ENCODE measurements at regions of chr14 and their contacts with region 1.

Region 1: GRCh38 chr14:50231475-50232275 is at the start of gene SOS2:
- DNase-seq: peak; percentile 95
- H3K4me3 Mint-ChIP-seq: peak within 1 kb of the TSS; percentile 92
- H3K27ac Mint-ChIP-seq: peak within 1 kb of the TSS; percentile 90
- H3K4me1 Mint-ChIP-seq: peaks cover 37% of the 10 kb centered on the region
- H3K27me3 Mint-ChIP-seq: no peaks in the 10 kb centered on the region
- total RNA-seq, gene SOS2: 17.7 and 17.8 TPM in 2 replicates

Region 2: DNA sequence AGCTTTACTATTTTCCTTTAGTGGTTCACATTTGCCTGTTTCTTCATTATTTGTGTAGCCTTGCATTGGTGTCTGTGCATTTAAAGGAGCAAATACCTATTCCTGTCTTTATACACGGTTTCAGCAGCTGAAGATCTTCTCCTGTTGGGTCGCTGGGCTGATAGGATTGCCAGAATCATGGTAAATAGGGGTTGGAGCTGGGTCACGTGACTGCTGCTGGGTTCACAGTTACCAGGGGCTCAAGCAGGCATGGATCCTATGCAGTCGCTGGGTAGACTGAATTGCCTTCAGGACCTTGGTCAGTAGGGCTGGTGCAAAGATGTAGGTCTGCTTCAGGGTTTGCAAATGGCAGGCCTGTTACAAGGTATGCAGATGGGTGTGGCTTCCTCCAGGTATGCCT is 1043.9 kb before region 1 on chr14:
- intact Hi-C with region 1: no loop called
- DNase-seq: no peak
- H3K4me3 Mint-ChIP-seq: no peak overlapping the region
- H3K27ac Mint-ChIP-seq: no peak overlapping the region
- H3K4me1 Mint-ChIP-seq: no peaks in the 10 kb centered on the region
- H3K27me3 Mint-ChIP-seq: no peaks in the 10 kb centered on the region

Region 3: GRCh38 chr14:49585803-49586672 is 645.6 kb before region 1 on chr14 and contains the start of gene RPS29:
- intact Hi-C with region 1: loop called (anchors 2 kb)
- DNase-seq: peak; percentile 99
- H3K4me3 Mint-ChIP-seq: peak within 1 kb of the TSS; percentile 89
- H3K27ac Mint-ChIP-seq: peak within 1 kb of the TSS; percentile 99
- H3K4me1 Mint-ChIP-seq: peaks cover 35% of the 10 kb centered on the region
- H3K27me3 Mint-ChIP-seq: peaks cover 3% of the 10 kb centered on the region
- total RNA-seq, gene RPS29: 1,960 and 2,033 TPM in 2 replicates

Region 4: DNA sequence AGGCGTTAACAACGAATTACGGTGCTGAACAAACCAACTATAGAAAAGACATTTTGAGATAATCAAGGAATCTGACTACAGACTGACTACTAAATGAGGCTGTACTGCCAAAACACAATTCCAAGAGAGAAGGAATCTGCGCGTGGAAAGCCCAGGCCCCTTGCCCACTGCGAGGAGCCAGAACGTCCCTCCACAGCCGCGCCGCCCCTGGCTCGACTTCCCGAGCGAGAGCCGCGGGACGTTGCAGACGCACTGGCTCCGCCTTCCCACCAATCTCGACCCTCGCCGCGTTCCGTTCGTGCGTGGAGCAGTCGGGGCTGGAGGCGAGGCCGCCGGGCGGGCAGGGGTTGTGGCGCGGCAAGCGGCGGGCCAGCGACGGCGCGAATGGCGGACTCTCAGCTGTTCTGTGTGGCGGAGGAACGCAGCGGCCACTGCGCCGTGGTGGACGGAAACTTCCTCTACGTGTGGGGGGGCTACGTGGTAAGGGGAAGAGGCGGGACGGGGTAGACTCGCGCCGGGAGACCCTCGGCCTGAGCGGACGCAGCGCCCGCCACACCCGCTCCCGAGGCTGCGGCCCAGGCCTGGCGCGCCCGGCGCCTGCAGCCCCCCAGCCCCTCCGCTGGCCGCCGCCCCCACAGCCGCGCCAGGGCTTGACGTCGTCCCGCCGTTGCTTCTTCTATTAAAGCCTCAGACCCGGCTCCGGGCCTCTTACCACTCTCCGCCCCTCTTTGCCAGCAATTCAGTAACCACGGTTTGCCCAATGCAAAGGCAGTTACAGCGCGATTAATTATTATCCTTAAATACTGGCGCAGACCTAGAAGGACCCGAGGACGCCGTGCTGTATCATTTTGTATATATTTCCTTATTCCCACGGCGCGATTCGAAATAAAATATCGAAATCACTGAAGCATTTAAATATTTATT is 538.6 kb before region 1 on chr14 and contains the start of gene KLHDC1:
- intact Hi-C with region 1: loop called (anchors 5 kb)
- DNase-seq: peak; percentile 95
- H3K4me3 Mint-ChIP-seq: peak within 1 kb of the TSS; percentile 79
- H3K27ac Mint-ChIP-seq: peak within 1 kb of the TSS; percentile 84
- H3K4me1 Mint-ChIP-seq: peaks cover 18% of the 10 kb centered on the region
- H3K27me3 Mint-ChIP-seq: no peaks in the 10 kb centered on the region
- total RNA-seq, gene KLHDC1: 0.95 and 0.96 TPM in 2 replicates

Region 5: GRCh38 chr14:49862089-49862673 is 369.5 kb before region 1 on chr14:
- intact Hi-C with region 1: loop called (anchors 2 kb)
- DNase-seq: peak; percentile 95
- H3K4me3 Mint-ChIP-seq: no peak overlapping the region
- H3K27ac Mint-ChIP-seq: no peak overlapping the region
- H3K4me1 Mint-ChIP-seq: peaks cover 18% of the 10 kb centered on the region
- H3K27me3 Mint-ChIP-seq: peaks cover 4% of the 10 kb centered on the region

Region 6: DNA sequence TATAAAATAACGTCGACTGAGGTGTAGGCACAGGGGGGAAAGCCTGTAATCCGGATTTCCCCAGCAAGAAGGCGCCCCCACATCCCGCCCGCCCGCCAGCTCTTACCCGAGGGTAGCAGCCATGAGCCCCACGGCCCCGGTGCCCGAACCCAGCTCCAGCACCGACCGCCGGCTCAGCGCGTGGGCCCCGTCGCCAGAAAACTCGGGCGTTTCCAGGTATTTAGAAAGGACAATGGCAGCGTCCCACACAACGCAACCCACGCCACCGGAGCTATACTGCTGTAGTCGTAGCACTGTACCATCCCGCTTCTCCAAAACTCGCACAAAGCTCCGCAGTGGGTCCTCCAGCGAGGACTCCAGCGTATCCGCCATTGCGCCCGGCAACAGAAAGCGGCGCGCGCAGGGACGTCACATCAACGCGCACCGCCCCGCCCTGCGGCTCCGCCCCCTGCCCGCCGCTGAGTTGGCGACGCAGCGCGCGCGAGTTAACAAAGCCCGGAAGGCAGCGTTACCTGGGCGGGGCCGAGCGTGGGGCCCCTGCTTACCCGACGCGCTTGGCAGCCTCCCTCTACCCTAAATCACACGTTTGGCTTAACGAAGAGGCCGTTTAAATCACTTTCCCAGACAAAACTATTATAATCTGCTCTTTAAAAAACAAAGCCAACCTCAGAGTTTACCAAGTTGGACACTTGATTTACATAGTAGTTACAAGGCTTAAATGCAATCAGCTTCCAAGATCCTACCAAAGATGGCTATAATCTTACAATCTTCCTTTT is 115.3 kb before region 1 on chr14 and contains the start of gene VCPKMT:
- intact Hi-C with region 1: loop called (anchors 2 kb)
- DNase-seq: peak; percentile 99
- H3K4me3 Mint-ChIP-seq: peak within 1 kb of the TSS; percentile 97
- H3K27ac Mint-ChIP-seq: peak within 1 kb of the TSS; percentile 99
- H3K4me1 Mint-ChIP-seq: peaks cover 20% of the 10 kb centered on the region
- H3K27me3 Mint-ChIP-seq: no peaks in the 10 kb centered on the region
- total RNA-seq, gene VCPKMT: 13.9 and 14.3 TPM in 2 replicates

Region 7: DNA sequence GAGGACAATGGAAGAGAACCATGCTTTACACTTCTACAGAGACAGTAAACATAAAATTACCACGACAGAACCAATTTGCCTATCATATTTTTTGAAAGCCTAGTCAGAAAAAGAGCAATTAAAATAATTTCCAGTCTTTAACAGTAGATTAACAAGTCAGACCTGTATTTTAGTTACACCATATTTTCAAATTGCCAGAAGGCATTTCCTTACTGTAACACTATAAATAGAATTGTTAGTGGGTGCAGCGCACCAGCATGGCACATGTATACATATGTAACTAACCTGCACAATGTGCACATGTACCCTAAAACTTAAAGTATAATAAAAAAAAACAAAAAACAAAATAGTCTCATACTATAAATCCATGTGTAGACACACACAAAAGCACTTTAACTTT is 16.3 kb before region 1 on chr14:
- intact Hi-C with region 1: no loop called
- DNase-seq: no peak
- H3K4me3 Mint-ChIP-seq: no peak overlapping the region
- H3K27ac Mint-ChIP-seq: no peak overlapping the region
- H3K4me1 Mint-ChIP-seq: peaks cover 6% of the 10 kb centered on the region
- H3K27me3 Mint-ChIP-seq: no peaks in the 10 kb centered on the region

Region 8: GRCh38 chr14:50321009-50321660 is 89.5 kb after region 1 on chr14:
- intact Hi-C with region 1: loop called (anchors 2 kb)
- DNase-seq: peak; percentile 91
- H3K4me3 Mint-ChIP-seq: no peak overlapping the region
- H3K27ac Mint-ChIP-seq: no peak overlapping the region
- H3K4me1 Mint-ChIP-seq: peaks cover 22% of the 10 kb centered on the region
- H3K27me3 Mint-ChIP-seq: no peaks in the 10 kb centered on the region

Region 9: GRCh38 chr14:50383618-50384225 is 152.0 kb after region 1 on chr14:
- intact Hi-C with region 1: no loop called
- DNase-seq: no peak
- H3K4me3 Mint-ChIP-seq: no peak overlapping the region
- H3K27ac Mint-ChIP-seq: no peak overlapping the region
- H3K4me1 Mint-ChIP-seq: no peaks in the 10 kb centered on the region
- H3K27me3 Mint-ChIP-seq: peaks cover 1% of the 10 kb centered on the region

Measured in activated CD4-positive, alpha-beta T cell treated with anti-CD3 and anti-CD28 coated beads, Interleukin-2, amount 10 ng/mL, durations not matched to agents 24 days and 14 days (primary cell).